ENCODE measurements at regions of chr2 and their contacts with region 1.

Region 1: DNA sequence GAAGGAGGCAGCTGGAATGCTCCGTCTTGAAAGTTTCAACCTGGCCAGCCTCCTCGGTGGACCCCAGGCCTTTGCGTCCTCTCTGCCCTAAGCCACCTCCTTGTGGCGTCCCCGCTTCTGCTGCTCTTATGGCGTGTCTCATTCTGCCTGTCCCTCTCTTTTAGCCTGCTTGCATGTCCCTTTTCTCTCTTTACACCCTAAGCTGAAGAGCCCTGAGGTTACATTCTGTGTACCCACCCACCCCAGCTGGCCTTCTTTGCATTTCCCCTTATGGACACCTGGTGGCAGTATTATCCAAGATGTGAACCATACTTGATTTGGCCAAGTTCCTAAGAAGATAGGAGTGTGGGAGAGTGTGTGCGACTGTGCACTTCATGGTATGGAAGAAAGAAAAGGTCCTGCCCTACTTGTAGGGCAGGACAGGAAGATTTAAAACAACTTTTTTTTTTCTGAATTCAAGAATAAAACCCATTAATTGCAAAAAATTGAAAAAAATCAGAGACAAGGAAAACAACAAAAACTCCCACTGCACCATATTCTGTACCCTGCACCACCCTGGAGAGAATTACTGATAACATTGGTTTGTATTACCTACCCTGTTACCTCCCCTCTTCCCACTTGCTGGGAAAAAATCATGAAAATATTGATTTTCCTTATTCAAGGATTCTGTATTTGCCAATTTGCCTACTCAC is 77.4 kb downstream of the DYSF start:
- DNase-seq: peak in 2 of 9 experiments; percentile 31 to 47
- ATAC-seq: no peak
- H3K4me3 ChIP-seq: no peak overlapping the region
- H3K4me3 Mint-ChIP-seq: no peak overlapping the region
- H3K27ac ChIP-seq: no peak overlapping the region
- H3K27ac Mint-ChIP-seq: no peak overlapping the region
- H3K4me1 ChIP-seq: no peaks in the 10 kb centered on the region
- H3K4me1 Mint-ChIP-seq: no peaks in the 10 kb centered on the region
- H3K27me3 ChIP-seq: no peaks in the 10 kb centered on the region
- H3K27me3 Mint-ChIP-seq: peaks cover 26% of the 10 kb centered on the region
- CTCF ChIP-seq: peak; percentile 51

Region 2: GRCh38 chr2:71566372-71566771 is 35.6 kb after region 1 on chr2:
- CTCF ChIA-PET with region 1: no interaction called
- POLR2A ChIA-PET with region 1: no interaction called
- intact Hi-C with region 1: no loop called
- DNase-seq: no peak
- ATAC-seq: no peak
- H3K4me3 ChIP-seq: no peak overlapping the region
- H3K4me3 Mint-ChIP-seq: no peak overlapping the region
- H3K27ac ChIP-seq: no peak overlapping the region
- H3K27ac Mint-ChIP-seq: no peak overlapping the region
- H3K4me1 ChIP-seq: no peaks in the 10 kb centered on the region
- H3K4me1 Mint-ChIP-seq: no peaks in the 10 kb centered on the region
- H3K27me3 ChIP-seq: no peaks in the 10 kb centered on the region
- H3K27me3 Mint-ChIP-seq: no peaks in the 10 kb centered on the region
- CTCF ChIP-seq: no peak

Region 3: GRCh38 chr2:72579591-72580180 is 1048.9 kb after region 1 on chr2:
- CTCF ChIA-PET with region 1: no interaction called
- POLR2A ChIA-PET with region 1: no interaction called
- intact Hi-C with region 1: loop called in 1 of 2 experiments (anchors 5 kb)
- DNase-seq: peak in 2 of 9 experiments; percentile 20 to 35
- ATAC-seq: no peak
- H3K4me3 ChIP-seq: no peak overlapping the region
- H3K4me3 Mint-ChIP-seq: no peak overlapping the region
- H3K27ac ChIP-seq: no peak overlapping the region
- H3K27ac Mint-ChIP-seq: no peak overlapping the region
- H3K4me1 ChIP-seq: no peaks in the 10 kb centered on the region
- H3K4me1 Mint-ChIP-seq: peaks cover 6% of the 10 kb centered on the region
- H3K27me3 ChIP-seq: no peaks in the 10 kb centered on the region
- H3K27me3 Mint-ChIP-seq: no peaks in the 10 kb centered on the region
- CTCF ChIP-seq: peak; percentile 47

Region 4: DNA sequence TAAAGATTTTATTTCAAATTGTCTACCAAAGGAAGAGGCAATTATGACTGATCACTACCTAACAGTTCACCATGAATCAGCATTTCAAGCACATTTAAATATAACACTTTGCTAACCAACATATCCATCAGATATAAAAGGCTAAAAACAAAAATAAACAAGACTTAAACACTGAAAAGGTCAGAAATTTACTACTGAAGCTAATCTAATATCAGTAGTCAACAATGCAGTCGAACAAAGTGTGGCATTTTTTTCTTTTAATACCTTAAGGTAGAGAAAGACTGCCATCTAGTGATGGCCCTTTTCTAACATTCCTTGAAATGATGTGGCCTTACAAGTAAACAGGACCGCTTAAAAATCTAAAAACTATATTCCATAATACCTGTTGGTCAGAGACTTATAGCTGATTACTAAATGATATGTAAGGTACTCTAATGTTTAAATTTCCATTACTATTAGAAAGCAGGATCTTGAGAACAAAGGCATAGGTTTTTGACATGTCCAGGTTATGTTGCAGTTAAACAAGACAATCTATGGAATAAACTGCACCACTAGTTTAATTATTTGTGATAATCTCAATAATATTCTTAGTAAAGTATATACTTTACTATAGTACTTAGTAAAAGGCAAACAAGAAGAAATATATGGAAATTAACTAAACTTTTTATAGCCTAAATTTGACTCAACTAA is 1215.0 kb after region 1 on chr2:
- CTCF ChIA-PET with region 1: no interaction called
- POLR2A ChIA-PET with region 1: no interaction called
- intact Hi-C with region 1: loop called in 1 of 2 experiments (anchors 5 kb)
- DNase-seq: peak in 2 of 9 experiments; percentile 45 to 55
- ATAC-seq: no peak
- H3K4me3 ChIP-seq: no peak overlapping the region
- H3K4me3 Mint-ChIP-seq: no peak overlapping the region
- H3K27ac ChIP-seq: no peak overlapping the region
- H3K27ac Mint-ChIP-seq: no peak overlapping the region
- H3K4me1 ChIP-seq: no peaks in the 10 kb centered on the region
- H3K4me1 Mint-ChIP-seq: no peaks in the 10 kb centered on the region
- H3K27me3 ChIP-seq: no peaks in the 10 kb centered on the region
- H3K27me3 Mint-ChIP-seq: no peaks in the 10 kb centered on the region
- CTCF ChIP-seq: peak; percentile 59